HAP-1 (cell line): ENCODE measurements at regions of chr12 and their contacts with region 1.

Region 1: DNA sequence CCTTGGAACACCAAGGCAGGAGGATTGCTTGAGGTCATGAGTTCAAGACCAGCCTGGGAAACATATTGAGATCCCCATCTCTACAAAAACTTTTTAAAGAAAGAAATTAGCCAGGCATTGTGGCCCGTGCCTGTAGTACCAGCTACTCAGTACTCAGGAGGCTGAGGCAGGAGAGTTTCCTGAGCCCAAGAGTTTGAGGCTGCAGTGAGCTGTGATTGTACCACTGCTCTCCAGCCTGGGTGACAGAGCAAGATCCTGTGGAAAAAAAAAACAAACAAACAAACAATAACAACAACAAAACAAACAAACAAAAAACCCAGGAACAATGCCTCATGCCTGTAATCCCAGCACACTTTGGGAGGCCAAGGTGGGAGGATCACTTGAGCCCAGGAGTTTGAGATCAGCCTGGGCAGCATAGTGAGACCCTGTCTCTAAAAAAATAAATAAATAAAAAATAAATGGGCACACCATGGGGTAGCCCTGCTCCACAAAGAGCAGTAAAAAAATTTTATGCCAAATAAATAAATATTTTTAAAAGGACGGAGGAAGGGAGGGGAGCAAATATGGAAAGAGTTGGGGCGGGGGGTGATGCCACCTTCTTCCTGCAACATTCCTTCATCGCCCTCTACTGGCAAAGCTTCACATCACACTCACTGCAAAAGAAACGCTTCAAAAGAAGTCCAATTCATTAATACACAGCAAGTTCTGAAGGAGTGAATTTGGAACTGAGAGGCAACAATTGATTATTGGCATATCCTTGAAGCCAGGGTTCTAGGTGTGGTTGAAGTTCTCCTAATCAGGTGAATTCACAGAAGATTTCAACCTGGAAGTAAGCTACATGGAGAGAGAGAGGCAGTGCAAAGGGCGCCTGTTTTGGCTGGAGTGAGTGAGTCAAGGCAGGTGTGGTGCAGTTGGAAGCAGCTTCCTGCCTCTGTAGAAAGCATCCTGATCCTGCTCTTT is 8.8 kb upstream of the GNPTAB start:
- DNase-seq: peak; percentile 42 to 83
- H3K4me3 ChIP-seq: no peak overlapping the region
- H3K4me1 ChIP-seq: peaks cover 6% of the 10 kb centered on the region; the same call in 1 of the 2 replicates
- H3K27me3 ChIP-seq: no peaks in the 10 kb centered on the region

Region 2: GRCh38 chr12:101769865-101770264 is 69.7 kb before region 1 on chr12:
- in situ Hi-C with region 1: loop called (anchors 5 kb)
- DNase-seq: no peak
- H3K4me3 ChIP-seq: no peak overlapping the region
- H3K4me1 ChIP-seq: no peaks in the 10 kb centered on the region
- H3K27me3 ChIP-seq: no peaks in the 10 kb centered on the region

Region 3: DNA sequence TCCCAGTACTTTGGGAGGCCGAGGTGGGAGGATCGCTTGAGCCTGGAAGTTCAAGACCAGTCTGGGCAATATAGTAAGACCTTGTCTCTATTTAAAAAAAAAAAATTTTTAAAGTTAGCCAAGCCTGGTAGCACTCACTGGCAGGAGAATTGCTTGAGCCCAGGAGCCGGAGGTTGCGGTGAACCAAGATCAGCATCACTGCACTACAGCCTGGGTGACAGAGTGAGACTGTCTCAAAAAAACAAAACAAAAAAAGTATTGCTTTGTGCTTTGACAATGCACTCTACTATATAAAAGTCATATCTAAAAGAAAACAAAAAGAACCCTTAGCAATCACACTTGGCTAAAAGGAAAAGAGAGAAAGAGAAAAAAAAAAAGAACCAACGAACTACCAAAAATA is 35.6 kb before region 1 on chr12:
- in situ Hi-C with region 1: no loop called
- DNase-seq: no peak
- H3K4me3 ChIP-seq: no peak overlapping the region
- H3K4me1 ChIP-seq: no peaks in the 10 kb centered on the region; the same call in 1 of the 2 replicates
- H3K27me3 ChIP-seq: no peaks in the 10 kb centered on the region

Region 4: GRCh38 chr12:101982307-101982706 is 142.7 kb after region 1 on chr12:
- in situ Hi-C with region 1: no loop called
- DNase-seq: no peak
- H3K4me3 ChIP-seq: no peak overlapping the region
- H3K4me1 ChIP-seq: no peaks in the 10 kb centered on the region
- H3K27me3 ChIP-seq: peaks cover 3% of the 10 kb centered on the region; the same call in 1 of the 2 replicates